ENCODE measurements at regions of chr6 and their contacts with region 1.

Region 1: GRCh38 chr6:88238065-88238464 is 71.9 kb upstream of the CNR1 start:
- DNase-seq: peak; percentile 58
- CTCF ChIP-seq: peak; percentile 58

Region 2: DNA sequence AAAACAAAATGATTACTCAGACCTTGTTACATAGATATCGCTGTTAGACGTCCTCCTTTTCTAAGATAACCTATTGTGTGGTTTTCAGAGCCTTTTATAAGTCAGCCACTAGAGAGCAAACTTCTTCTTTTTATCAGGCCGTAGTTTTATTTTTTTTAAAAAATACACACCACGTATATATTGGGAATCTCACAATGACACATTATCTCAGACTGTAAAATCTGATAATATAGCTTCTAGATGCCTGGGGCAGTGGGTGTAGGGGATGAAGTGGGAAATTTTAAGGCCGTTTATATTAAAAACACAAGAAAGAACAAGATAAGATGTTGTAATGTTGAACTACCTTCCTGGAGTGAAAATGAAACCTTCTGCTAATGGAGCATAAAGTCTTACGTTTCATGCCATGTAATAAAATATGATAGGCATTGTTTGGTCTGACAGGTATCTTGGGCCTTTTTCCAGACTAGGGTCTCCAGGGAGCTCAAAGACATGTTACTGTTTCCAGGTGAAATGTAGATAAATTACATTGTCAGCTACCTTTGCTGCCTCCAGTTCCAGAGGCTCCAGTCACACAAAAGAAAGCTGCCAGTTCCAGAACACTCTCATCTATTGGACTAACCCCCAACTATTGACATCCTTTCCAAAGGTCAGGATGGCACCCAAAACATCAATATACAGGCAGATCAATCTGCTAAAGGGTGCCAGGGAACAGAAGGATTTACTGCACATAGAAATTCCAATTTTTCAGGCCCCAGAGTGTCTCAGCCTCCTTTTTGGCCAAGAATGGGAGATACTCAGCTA is 405.8 kb before region 1 on chr6:
- in situ Hi-C with region 1: loop called (anchors 10 kb)
- DNase-seq: peak; percentile 49
- CTCF ChIP-seq: peak; percentile 33